Cardiac septum (tissue), 1 donor: ENCODE measurements at regions of chr11 and their contacts with region 1.

Region 1: GRCh38 chr11:114953039-114953438 is 274.7 kb downstream of the NXPE2 start:
- DNase-seq: no peak

Region 2: GRCh38 chr11:114774599-114775361 is 178.3 kb before region 1 on chr11:
- intact Hi-C with region 1: loop called (anchors 2 kb)
- DNase-seq: no peak

Region 3: DNA sequence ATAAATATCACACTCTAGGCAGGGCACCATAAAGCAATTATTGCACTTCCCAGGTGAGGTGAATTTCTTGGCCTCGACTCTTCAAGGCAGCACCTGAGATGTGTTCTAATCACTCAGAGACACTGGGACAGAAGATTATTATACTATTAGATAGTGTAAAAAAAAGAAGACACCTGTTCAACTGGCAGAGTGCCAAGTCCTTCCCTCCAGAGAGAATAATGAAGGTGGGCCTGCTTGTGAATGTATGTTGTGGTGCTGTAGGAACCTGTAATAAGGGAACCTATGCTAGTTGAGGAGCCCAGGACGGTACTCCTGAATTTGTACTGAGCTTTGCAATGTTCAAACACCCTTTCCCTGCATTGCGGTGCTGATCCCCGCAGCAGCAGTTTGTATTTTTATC is 167.2 kb before region 1 on chr11:
- intact Hi-C with region 1: loop called (anchors 5 kb)
- DNase-seq: no peak

Region 4: DNA sequence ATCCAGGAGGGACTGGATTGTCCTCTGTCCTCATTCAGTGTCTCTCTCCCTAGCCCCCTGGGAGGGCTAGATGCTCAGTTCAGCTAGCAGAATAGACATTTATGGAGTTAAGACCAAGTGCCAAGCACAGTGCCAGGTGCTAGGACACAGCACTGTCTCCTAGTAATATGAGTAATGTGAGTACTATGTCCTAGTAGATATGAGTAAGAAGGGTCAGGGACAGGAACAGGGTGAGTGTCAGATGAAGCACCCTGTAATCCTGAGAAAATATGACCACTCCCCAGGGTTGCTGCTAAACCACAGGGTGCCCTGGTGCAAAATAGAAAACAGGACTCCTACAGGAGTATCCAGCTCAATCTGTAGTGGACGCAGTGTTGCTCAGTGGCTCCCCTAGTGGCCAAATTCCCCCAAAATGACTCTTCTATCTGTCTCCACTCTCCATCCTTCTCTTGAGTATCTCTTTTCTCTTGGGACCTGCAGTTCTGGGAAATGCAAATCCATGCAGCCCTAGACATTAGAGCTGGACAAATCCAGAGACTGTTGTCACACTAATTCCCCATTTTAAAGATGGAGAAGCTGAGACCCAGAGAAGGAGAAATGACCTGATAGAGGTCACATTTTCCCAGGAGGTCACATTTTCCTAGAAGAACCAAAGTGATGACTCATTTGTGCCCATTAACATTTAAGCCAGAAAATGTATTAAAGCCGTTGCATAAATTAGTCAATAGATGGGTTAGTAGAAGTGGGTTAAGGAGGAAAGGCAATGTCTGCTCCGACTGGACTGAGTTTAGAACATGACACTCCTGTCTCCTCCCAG is 60.5 kb before region 1 on chr11:
- intact Hi-C with region 1: no loop called
- DNase-seq: no peak